Activated T-helper 2 cell treated with anti-CD3 and anti-CD28 coated beads, Interferon-gamma antibody, Interleukin-2, Interleukin-4, amounts not matched to agents 10 μg/mL and 5 μg/mL and 100 μg/mL, durations not matched to agents 14 hours and 24 hours and 36 hours (primary cell): ENCODE measurements at regions of chr14 and their contacts with region 1.

Region 1: GRCh38 chr14:68727315-68728047 is 65.4 kb downstream of the ZFP36L1 start:
- DNase-seq: no peak
- H3K4me3 Mint-ChIP-seq: no peak overlapping the region
- H3K27ac Mint-ChIP-seq: no peak overlapping the region
- H3K4me1 Mint-ChIP-seq: peaks cover 40% of the 10 kb centered on the region
- H3K27me3 Mint-ChIP-seq: no peaks in the 10 kb centered on the region

Region 2: GRCh38 chr14:68482772-68483395 is 244.6 kb before region 1 on chr14:
- intact Hi-C with region 1: loop called (anchors 5 kb)
- DNase-seq: no peak
- H3K4me3 Mint-ChIP-seq: no peak overlapping the region
- H3K27ac Mint-ChIP-seq: no peak overlapping the region
- H3K4me1 Mint-ChIP-seq: peaks cover 34% of the 10 kb centered on the region
- H3K27me3 Mint-ChIP-seq: no peaks in the 10 kb centered on the region

Region 3: GRCh38 chr14:68685419-68686204 is 41.9 kb before region 1 on chr14:
- intact Hi-C with region 1: loop called (anchors 1 kb)
- DNase-seq: peak; percentile 70
- H3K4me3 Mint-ChIP-seq: peak overlapping the region; percentile 24
- H3K27ac Mint-ChIP-seq: peak overlapping the region; percentile 76
- H3K4me1 Mint-ChIP-seq: peaks cover 41% of the 10 kb centered on the region
- H3K27me3 Mint-ChIP-seq: no peaks in the 10 kb centered on the region

Region 4: GRCh38 chr14:68695326-68695768 is 32.1 kb before region 1 on chr14:
- intact Hi-C with region 1: loop called (anchors 1 kb)
- DNase-seq: no peak
- H3K4me3 Mint-ChIP-seq: no peak overlapping the region
- H3K27ac Mint-ChIP-seq: peak overlapping the region; percentile 18
- H3K4me1 Mint-ChIP-seq: peaks cover 21% of the 10 kb centered on the region
- H3K27me3 Mint-ChIP-seq: peaks cover 2% of the 10 kb centered on the region

Region 5: DNA sequence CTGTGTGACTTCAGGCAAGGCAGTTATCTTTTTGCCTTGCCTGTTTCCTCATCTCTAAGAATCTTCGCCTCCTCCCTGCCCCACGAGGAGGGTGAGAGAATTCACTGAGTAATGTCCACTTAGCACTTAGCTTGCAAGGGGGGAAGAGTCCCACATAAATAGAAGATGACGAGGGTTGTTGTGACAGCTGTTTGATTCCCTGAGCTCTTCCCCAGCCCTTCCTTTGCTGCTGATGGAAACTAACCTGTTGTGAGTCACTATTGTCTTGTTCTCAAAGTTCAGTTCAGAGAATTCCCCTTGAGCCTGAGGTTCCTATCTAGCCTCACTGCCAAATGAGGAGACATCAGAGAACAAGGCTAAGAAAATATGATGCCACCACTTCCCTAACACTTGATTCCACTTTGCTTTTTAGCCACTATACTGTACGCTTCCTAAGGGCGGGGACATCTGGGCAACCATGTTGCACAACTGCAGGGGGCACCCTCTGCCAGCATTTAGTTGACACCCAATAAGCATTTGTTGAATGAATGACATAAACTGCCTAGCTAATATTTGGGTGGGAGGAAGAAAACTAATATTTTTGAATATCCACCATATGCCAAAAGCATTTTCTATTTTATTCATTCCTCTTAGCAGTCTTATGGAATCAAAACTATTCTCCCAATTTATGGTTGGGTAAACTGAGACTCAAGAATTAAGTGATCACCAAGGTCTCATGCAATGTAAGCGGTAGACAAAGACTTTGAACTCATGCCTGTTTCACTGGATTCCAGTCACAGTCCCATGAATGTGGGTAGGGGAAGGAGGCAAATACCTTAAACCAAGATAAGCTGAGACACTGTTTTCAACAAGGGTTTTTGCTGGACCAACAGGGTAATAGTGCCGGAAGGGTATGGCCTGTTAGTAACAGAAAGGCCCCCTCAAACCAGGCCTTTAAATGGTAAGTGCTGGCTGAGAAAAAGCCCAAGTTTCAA is 12.2 kb before region 1 on chr14:
- intact Hi-C with region 1: no loop called
- DNase-seq: no peak
- H3K4me3 Mint-ChIP-seq: no peak overlapping the region
- H3K27ac Mint-ChIP-seq: peak overlapping the region; percentile 31
- H3K4me1 Mint-ChIP-seq: peaks cover 39% of the 10 kb centered on the region
- H3K27me3 Mint-ChIP-seq: no peaks in the 10 kb centered on the region

Region 6: GRCh38 chr14:68939893-68940613 is 212.6 kb after region 1 on chr14:
- intact Hi-C with region 1: no loop called
- DNase-seq: no peak
- H3K4me3 Mint-ChIP-seq: no peak overlapping the region
- H3K27ac Mint-ChIP-seq: no peak overlapping the region
- H3K4me1 Mint-ChIP-seq: peaks cover 12% of the 10 kb centered on the region
- H3K27me3 Mint-ChIP-seq: no peaks in the 10 kb centered on the region

Region 7: GRCh38 chr14:68961781-68962584 is 234.5 kb after region 1 on chr14:
- intact Hi-C with region 1: no loop called
- DNase-seq: no peak
- H3K4me3 Mint-ChIP-seq: no peak overlapping the region
- H3K27ac Mint-ChIP-seq: no peak overlapping the region
- H3K4me1 Mint-ChIP-seq: peaks cover 17% of the 10 kb centered on the region
- H3K27me3 Mint-ChIP-seq: no peaks in the 10 kb centered on the region